ENCODE measurements at regions of chr4 and their contacts with region 1.

Region 1: DNA sequence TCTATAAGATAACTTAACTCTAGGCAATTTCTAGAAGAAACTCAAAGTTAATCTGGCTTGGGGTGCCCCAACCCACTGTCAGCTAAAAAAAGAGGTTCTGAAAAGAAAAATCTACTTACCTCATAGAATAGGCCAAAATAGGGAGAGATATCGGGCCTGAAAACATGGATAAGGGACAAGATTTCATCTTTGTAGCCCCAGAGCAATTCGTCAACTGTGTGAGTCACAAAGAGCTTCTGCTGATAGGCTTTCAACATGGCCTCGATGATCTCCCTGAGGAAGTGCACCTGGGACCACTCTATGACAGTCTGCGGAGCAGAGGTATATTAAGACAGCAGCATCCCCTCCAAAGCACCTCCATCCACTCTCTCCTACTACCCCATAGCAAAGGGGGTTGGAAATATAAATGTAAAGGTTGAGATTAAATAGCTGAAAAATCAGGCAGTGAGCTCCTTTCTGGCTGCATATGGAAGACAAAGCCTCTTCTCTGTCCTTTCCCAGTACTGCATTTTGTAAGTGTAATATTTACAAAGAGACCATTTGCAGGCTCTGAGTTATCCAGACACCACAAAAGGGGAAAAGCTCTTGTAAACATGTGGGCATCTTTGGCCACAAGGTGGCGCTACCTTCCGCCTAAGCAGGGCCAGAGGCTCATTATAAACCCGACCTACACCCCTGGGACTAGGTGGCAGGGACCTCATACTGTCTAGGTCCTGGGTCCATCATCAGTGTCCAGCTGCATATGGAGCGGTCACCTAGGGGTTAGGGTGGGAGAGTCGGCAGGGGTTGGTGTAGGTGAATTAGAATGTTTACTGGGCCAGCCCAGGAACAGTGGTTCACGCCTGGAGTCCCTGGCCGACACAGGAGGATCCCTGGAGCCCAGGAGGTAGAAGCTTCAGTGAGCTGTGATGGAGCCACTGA is 31.5 kb upstream of the NUP54 start:
- DNase-seq: peak; percentile 8
- H3K4me3 ChIP-seq: no peak overlapping the region
- H3K27me3 ChIP-seq: no peaks in the 10 kb centered on the region
- CTCF ChIP-seq: peak; percentile 88

Region 2: GRCh38 chr4:76194325-76194724 is 14.7 kb after region 1 on chr4:
- CTCF ChIA-PET with region 1: interaction called, 34 read pairs
- POLR2A ChIA-PET with region 1: no interaction called
- DNase-seq: peak; percentile 86
- H3K4me3 ChIP-seq: no peak overlapping the region
- H3K27me3 ChIP-seq: no peaks in the 10 kb centered on the region
- CTCF ChIP-seq: no peak

Region 3: GRCh38 chr4:76213415-76214176 is 33.9 kb after region 1 on chr4 and contains the start of gene SCARB2:
- CTCF ChIA-PET with region 1: interaction called, 21 read pairs
- POLR2A ChIA-PET with region 1: no interaction called
- DNase-seq: peak; percentile 38
- H3K4me3 ChIP-seq: peak within 1 kb of the TSS; percentile 82
- H3K27me3 ChIP-seq: no peaks in the 10 kb centered on the region
- CTCF ChIP-seq: no peak
- polyA plus RNA-seq, gene SCARB2: 65.3 and 120 TPM in 2 replicates

Region 4: DNA sequence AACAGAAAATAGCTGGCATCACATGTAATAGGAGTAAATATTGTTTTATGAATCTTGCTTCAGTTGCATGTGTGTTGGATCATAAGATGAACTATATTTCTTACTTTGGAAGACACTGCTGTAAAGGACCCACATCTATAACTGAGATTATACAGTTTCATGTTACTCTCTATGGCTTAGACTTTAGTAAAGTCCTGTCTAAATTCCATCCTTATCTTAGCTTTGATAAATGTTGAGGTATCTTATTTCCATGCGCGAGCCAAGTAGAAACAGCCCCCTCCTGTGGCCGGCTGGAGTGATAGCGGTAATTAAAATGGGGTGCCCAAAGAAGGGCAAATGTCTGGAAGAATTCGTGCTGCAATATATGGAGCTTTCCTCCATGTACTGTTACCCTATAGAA is 198.3 kb after region 1 on chr4:
- CTCF ChIA-PET with region 1: interaction called, 78 read pairs
- POLR2A ChIA-PET with region 1: no interaction called
- DNase-seq: no peak
- H3K4me3 ChIP-seq: no peak overlapping the region
- H3K27me3 ChIP-seq: peaks cover 1% of the 10 kb centered on the region; the same call in 1 of the 2 replicates
- CTCF ChIP-seq: peak; percentile 66

Region 5: DNA sequence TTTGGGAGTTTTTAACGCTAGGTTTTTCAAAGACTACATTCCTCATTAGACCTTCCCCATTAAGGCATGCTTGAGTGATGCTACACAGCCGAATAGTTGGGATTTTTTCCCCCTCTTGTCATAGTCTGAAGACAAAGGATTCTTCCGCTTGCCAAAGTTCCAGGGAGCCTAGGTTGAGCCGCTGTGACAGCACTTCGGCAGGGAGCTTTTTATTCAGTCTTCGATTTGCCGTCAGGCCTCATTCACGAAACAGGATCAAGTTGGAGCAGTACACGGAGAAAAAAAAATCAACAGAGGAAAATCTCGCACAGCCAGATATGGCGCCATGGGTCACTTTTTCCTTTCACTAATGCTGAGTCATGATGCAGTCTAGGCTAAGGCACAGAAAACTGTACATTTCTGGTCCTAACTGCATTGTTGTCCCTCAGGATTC is 279.6 kb after region 1 on chr4:
- CTCF ChIA-PET with region 1: no interaction called
- POLR2A ChIA-PET with region 1: no interaction called
- DNase-seq: no peak
- H3K4me3 ChIP-seq: no peak overlapping the region
- H3K27me3 ChIP-seq: no peaks in the 10 kb centered on the region
- CTCF ChIP-seq: no peak

Region 6: DNA sequence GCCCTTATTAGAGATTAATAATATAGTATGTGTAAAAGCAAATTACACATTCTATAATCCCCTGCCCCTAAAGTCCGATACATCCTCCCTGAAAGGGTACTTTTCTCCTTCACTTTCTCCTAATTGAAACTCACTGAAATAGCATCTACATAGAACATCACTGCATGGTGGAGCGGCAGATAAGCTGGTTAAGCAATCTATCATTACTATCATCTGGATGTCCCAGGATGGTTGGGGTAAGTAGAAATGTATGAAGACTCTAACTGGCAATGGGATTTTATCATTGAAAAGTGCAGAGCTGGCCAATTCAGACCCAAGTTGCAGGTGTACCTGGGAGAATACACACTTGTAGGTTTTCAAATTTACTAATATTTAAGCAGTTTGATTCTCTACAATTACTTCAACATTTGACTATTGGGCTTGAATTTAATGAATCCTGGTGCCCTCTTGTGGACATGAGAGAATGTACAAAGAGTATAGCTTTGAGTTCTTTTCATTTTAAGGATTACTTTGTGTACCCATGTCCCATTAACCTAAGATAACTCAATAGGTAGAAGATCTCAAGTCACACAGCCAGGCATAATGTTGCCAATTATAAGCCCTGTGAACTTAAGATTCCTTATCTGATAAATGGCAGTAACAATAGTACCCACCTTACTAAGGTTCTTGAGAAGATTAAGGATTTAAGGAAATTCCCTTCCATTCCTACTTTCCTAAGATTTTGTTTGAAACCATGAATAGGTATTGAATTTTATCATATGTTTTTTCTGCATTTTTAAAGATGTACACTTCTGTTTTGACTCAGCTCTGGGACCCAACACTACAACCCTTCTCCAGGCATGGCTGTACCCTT is 325.2 kb after region 1 on chr4:
- CTCF ChIA-PET with region 1: interaction called, 29 read pairs
- POLR2A ChIA-PET with region 1: no interaction called
- DNase-seq: no peak
- H3K4me3 ChIP-seq: no peak overlapping the region
- H3K27me3 ChIP-seq: 0 out of 2 replicates have a peak, but pooled peaks cover 2% of the 10 kb centered on the region
- CTCF ChIP-seq: peak; percentile 65